ENCODE measurements at regions of chr7 and their contacts with region 1.

Region 1: GRCh38 chr7:95545078-95545498 is 51.2 kb downstream of the PDK4 start:
- DNase-seq: peak; percentile 57 to 90 (median 71)
- H3K4me3 ChIP-seq: peak overlapping the region in 2 of 4 donors; percentile 5 to 56
- H3K27ac ChIP-seq: peak overlapping the region; percentile 21 to 94 (median 79)
- H3K4me1 ChIP-seq: peaks cover 43 to 59% of the 10 kb centered on the region in 2 donors
- H3K27me3 ChIP-seq: no peaks in the 10 kb centered on the region
- CTCF ChIP-seq: peak; percentile 46 to 82 (median 74)
- POLR2A ChIP-seq: peak in 1 of 2 donors; percentile 31

Region 2: DNA sequence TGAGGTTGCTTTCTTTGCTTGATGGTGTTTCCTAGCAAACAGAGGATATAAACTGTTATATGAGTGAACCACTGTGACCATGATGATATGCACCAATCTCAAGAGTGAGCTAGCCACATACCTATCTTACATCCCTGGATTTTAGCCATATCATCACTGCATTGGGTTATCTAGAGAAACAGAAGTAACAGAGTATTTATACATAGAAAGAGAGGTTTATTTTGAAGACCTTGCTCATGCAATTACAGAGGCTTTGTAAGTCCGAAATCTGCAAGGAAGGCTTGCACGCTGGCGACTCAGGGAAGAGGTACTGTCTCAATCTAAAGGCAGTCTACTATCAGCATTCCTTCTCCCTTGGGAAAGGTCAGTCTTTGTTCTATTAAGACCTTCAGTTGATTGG is 98.5 kb before region 1 on chr7:
- intact Hi-C with region 1: no loop called
- DNase-seq: no peak
- H3K4me3 ChIP-seq: no peak overlapping the region
- H3K27ac ChIP-seq: no peak overlapping the region
- H3K4me1 ChIP-seq: no peaks in the 10 kb centered on the region
- H3K27me3 ChIP-seq: no peaks in the 10 kb centered on the region
- CTCF ChIP-seq: no peak
- POLR2A ChIP-seq: no peak

Region 3: GRCh38 chr7:95589031-95589430 is 43.9 kb after region 1 on chr7:
- intact Hi-C with region 1: loop called in 1 of 2 experiments (anchors 5 kb)
- DNase-seq: no peak
- H3K4me3 ChIP-seq: peak overlapping the region in 1 of 4 donors; percentile 88
- H3K27ac ChIP-seq: peak overlapping the region in 4 of 5 donors; percentile 42 to 97 (median 62)
- H3K4me1 ChIP-seq: peaks cover 38 to 99% of the 10 kb centered on the region in 2 donors
- H3K27me3 ChIP-seq: no peaks in the 10 kb centered on the region
- CTCF ChIP-seq: no peak
- POLR2A ChIP-seq: peak in 1 of 2 donors; percentile 21

Region 4: DNA sequence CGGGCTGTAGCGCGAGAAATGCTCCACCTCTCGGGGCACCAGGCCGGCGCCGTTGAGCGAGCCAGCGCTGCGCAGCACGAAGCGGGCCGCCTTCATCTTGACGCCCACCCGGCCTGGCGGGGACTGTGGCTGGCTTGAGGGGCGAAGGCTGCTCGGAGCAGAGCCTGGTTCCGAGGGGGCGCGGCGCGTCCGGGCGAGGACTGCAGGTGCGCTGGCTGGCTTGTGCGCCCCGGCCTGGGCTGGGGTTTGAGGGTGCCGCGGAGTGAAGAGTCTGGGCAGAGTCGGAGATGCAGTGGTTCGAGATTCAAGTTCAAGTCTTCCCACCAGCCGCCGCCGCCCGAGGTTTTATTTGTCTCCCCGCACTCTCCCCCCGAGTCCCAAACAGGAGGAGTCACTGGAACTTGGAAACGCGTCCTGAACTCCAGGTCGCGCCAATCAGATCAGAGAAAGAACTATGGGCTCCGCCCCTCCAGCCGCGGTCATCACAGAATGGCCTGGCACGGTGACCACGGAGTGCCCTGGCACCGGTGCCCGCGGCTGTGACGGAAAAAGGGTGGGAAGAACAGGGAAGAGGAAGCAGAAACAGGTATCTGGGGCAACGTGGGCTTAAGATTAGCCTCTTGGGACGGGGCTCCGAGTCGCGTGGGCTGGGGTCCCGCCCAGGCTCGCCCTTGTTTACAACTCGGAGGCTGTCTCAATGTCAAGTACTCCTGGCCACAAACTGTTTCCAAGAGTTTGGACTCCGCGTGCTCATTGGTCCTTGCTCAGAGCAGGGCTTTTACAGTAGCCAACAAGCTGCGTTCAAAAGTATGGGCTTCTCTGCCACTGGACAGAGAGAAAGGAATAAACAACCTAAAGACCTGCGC is 51.3 kb after region 1 on chr7 and contains the start of gene PDK4:
- intact Hi-C with region 1: loop called in 1 of 2 experiments (anchors 5 kb)
- DNase-seq: peak; percentile 96 to 99 (median 98)
- H3K4me3 ChIP-seq: peak within 1 kb of the TSS; percentile 24 to 88 (median 74)
- H3K27ac ChIP-seq: peak within 1 kb of the TSS; percentile 81 to 99 (median 95)
- H3K4me1 ChIP-seq: peaks cover 15 to 48% of the 10 kb centered on the region in 2 donors
- H3K27me3 ChIP-seq: no peaks in the 10 kb centered on the region
- CTCF ChIP-seq: peak in 1 of 6 experiments; percentile 10
- POLR2A ChIP-seq: peak; percentile 96
- total RNA-seq, gene PDK4: 60.1 to 690 (median 417) TPM